ENCODE measurements at regions of chr1 and their contacts with region 1.

Region 1: GRCh38 chr1:44029906-44030604 is 1.2 kb downstream of the SLC6A9 start:
- DNase-seq: peak; percentile 94
- ATAC-seq: peak; percentile 80
- H3K4me3 ChIP-seq: peak overlapping the region; percentile 17 to 87 (median 81)
- H3K4me3 Mint-ChIP-seq: peak overlapping the region; percentile 98
- H3K27ac ChIP-seq: peak overlapping the region; percentile 71 to 72
- H3K27ac Mint-ChIP-seq: peak overlapping the region; percentile 96
- H3K4me1 ChIP-seq: peaks cover 10 to 31% of the 10 kb centered on the region in 2 donors
- H3K4me1 Mint-ChIP-seq: peaks cover 37% of the 10 kb centered on the region
- H3K27me3 ChIP-seq: peaks cover 0 to 4% (median 0%) of the 10 kb centered on the region in 4 experiments
- H3K27me3 Mint-ChIP-seq: no peaks in the 10 kb centered on the region
- CTCF ChIP-seq: no peak

Region 2: DNA sequence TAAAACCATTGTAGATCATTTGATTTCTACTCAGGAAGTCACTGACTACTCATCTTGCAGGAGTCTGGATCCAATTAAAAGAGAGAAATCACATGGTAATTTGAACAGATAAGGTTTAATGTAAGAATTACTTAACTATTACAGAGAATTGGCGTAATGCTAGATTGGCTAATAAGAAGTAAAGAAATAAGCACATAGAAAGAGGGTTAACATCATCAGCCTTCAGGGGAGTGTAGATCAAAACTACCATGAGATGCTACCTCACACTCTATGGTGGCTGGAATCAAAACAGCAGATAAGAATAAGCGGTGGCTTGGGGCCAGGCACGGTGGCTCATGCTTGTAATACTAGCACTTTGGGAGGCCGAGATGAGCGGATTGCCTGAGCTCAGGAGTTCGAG is 311.0 kb before region 1 on chr1:
- CTCF ChIA-PET with region 1: no interaction called
- POLR2A ChIA-PET with region 1: no interaction called
- intact Hi-C with region 1: no loop called
- DNase-seq: no peak
- ATAC-seq: no peak
- H3K4me3 ChIP-seq: no peak overlapping the region
- H3K4me3 Mint-ChIP-seq: no peak overlapping the region
- H3K27ac ChIP-seq: no peak overlapping the region
- H3K27ac Mint-ChIP-seq: no peak overlapping the region
- H3K4me1 ChIP-seq: no peaks in the 10 kb centered on the region
- H3K4me1 Mint-ChIP-seq: no peaks in the 10 kb centered on the region
- H3K27me3 ChIP-seq: no peaks in the 10 kb centered on the region
- H3K27me3 Mint-ChIP-seq: no peaks in the 10 kb centered on the region
- CTCF ChIP-seq: no peak

Region 3: DNA sequence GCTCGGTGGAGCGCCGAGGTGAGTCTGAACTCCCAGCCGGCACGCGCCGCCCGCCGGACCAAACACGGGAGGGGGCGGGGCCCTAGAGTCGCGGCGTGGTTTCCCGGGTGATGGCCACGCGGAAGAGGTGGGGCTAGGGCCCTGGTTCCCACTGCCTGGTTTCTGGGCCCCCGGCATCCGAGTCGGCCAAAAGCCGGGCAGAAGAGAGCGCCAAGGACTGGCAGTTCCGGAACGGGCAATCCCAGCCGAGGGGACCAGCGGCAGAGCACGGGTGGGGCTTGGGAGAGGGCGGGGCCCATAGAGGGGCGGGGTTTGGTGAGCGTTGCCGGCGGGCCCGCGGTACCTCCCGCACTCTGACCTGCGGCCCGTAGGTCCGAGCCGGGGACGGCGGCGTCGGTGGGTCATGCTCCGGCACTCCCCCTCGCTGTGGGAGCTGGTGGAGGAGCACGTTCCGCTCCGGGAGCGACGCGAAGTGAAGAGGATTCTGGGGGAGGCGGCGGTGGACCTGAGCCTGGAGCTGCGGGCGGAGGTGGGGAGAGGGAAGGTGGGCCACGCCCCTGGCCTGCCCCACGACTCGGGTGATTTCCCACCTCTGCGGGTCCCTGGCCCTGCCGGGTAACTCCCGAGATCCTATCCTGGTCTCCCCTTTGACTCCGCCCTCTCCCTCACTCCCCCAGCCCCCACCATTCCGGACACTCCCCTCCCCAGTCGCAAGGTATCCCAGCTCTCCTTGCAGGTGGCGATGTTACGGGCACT is 38.4 kb before region 1 on chr1 and contains the start of gene CCDC24:
- CTCF ChIA-PET with region 1: interaction called, 3 read pairs
- POLR2A ChIA-PET with region 1: interaction called, 3 read pairs
- intact Hi-C with region 1: loop called (anchors 1 kb)
- DNase-seq: peak; percentile 84
- ATAC-seq: peak; percentile 89
- H3K4me3 ChIP-seq: peak within 1 kb of the TSS; percentile 11 to 81 (median 72)
- H3K4me3 Mint-ChIP-seq: peak within 1 kb of the TSS; percentile 96
- H3K27ac ChIP-seq: peak within 1 kb of the TSS in 1 of 2 donors; percentile 75
- H3K27ac Mint-ChIP-seq: peak within 1 kb of the TSS; percentile 91
- H3K4me1 ChIP-seq: peaks cover 22 to 44% of the 10 kb centered on the region in 2 donors
- H3K4me1 Mint-ChIP-seq: peaks cover 38% of the 10 kb centered on the region
- H3K27me3 ChIP-seq: no peaks in the 10 kb centered on the region
- H3K27me3 Mint-ChIP-seq: no peaks in the 10 kb centered on the region
- CTCF ChIP-seq: no peak
- total RNA-seq, gene CCDC24: 18.0 and 18.4 TPM in 2 replicates

Region 4: DNA sequence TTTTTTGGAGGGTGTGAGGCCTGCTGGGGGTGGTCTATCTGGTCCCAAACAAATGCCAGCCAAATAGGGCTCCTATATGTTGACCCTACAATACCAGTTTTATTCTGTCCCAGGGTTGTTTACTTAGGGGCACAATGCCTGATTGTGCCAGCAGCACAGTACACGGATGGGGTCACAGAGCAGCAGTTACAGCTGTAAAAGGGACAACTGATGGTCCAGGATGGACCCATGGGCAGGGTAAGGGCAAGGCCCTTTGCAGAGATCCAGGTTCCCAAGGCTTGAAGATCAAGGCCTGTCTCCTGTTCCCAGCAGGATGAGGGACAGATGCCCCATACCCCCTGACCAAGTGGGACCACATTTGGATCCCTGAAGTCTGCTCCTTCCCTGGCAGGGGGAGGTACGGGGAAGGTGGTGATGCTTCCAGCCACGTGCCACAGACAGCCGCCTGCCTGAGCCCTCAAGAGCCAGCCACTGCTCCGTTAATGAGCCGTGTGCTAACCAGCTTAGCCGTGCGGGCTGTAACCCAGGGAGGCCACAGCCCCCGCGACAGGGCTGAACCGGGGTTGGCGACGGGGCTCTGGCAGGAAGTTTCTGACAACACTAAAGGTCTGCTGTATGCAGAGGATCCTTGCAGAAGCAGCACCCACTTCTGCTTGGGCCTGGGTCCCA is 17.0 kb before region 1 on chr1:
- CTCF ChIA-PET with region 1: interaction called, 227 read pairs
- POLR2A ChIA-PET with region 1: interaction called, 5 read pairs
- intact Hi-C with region 1: no loop called
- DNase-seq: no peak
- ATAC-seq: no peak
- H3K4me3 ChIP-seq: no peak overlapping the region
- H3K4me3 Mint-ChIP-seq: no peak overlapping the region
- H3K27ac ChIP-seq: no peak overlapping the region
- H3K27ac Mint-ChIP-seq: no peak overlapping the region
- H3K4me1 ChIP-seq: no peaks in the 10 kb centered on the region
- H3K4me1 Mint-ChIP-seq: no peaks in the 10 kb centered on the region
- H3K27me3 ChIP-seq: no peaks in the 10 kb centered on the region
- H3K27me3 Mint-ChIP-seq: peaks cover 9% of the 10 kb centered on the region
- CTCF ChIP-seq: no peak

Measured in B cell (primary cell).